Sigmoid colon (tissue), 7 donors: ENCODE measurements at regions of chr9 and their contacts with region 1.

Region 1: GRCh38 chr9:106878924-106879323 is 16.0 kb downstream of the ZNF462 start:
- DNase-seq: peak; percentile 94
- H3K4me3 ChIP-seq: no peak overlapping the region
- H3K27ac ChIP-seq: peak overlapping the region; percentile 72 to 80 (median 77)
- H3K4me1 ChIP-seq: peaks cover 0 to 86% (median 71%) of the 10 kb centered on the region in 4 donors
- H3K27me3 ChIP-seq: no peaks in the 10 kb centered on the region
- CTCF ChIP-seq: no peak
- EP300 ChIP-seq: peak in 3 of 4 donors; percentile 37 to 69 (median 39)
- POLR2A ChIP-seq: no peak

Region 2: GRCh38 chr9:106648799-106649198 is 230.1 kb before region 1 on chr9:
- intact Hi-C with region 1: no loop called
- DNase-seq: no peak
- H3K4me3 ChIP-seq: no peak overlapping the region
- H3K27ac ChIP-seq: no peak overlapping the region
- H3K4me1 ChIP-seq: no peaks in the 10 kb centered on the region
- H3K27me3 ChIP-seq: no peaks in the 10 kb centered on the region
- CTCF ChIP-seq: peak in 2 of 4 experiments; percentile 5 to 15
- EP300 ChIP-seq: no peak
- POLR2A ChIP-seq: no peak

Region 3: DNA sequence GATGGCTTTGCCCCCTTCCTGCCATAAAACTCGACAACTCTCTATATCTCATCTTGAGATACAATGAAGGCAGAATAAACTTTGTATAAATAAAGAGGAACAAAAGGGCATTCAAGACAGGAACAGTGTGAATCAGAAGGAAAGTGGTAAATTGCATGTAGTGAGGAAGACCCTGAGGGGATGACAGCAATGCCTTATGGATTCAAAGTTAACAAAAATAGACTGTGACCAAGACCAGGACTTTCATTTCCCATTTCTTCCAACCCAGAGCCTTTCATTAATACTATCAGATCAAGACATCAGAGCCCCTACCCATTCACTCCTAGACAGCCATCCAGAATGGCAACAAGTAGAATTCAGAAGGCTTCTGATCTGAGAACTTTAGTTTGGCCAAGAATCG is 62.4 kb before region 1 on chr9:
- intact Hi-C with region 1: no loop called
- DNase-seq: no peak
- H3K4me3 ChIP-seq: no peak overlapping the region
- H3K27ac ChIP-seq: no peak overlapping the region
- H3K4me1 ChIP-seq: no peaks in the 10 kb centered on the region
- H3K27me3 ChIP-seq: no peaks in the 10 kb centered on the region
- CTCF ChIP-seq: no peak
- EP300 ChIP-seq: no peak
- POLR2A ChIP-seq: no peak

Region 4: GRCh38 chr9:107282753-107283625 is 404.1 kb after region 1 on chr9 and contains the start of gene RAD23B:
- intact Hi-C with region 1: loop called (anchors 10 kb)
- DNase-seq: peak; percentile 99
- H3K4me3 ChIP-seq: peak within 1 kb of the TSS; percentile 94 to 99 (median 96)
- H3K27ac ChIP-seq: peak within 1 kb of the TSS; percentile 99 to 100 (median 99)
- H3K4me1 ChIP-seq: peaks cover 0 to 45% (median 31%) of the 10 kb centered on the region in 4 donors
- H3K27me3 ChIP-seq: no peaks in the 10 kb centered on the region
- CTCF ChIP-seq: no peak
- EP300 ChIP-seq: peak in 2 of 4 donors; percentile 11 to 39
- POLR2A ChIP-seq: peak; percentile 74 to 81
- total RNA-seq, gene RAD23B: 61.9 to 74.3 (median 66.4) TPM